CD4-positive, alpha-beta T cell (primary cell): ENCODE measurements at regions of chr19 and their contacts with region 1.

Region 1: GRCh38 chr19:36528194-36528920 is at the start of gene ZNF260:
- DNase-seq: peak; percentile 82 to 97 (median 88)
- ATAC-seq: peak; percentile 87
- H3K4me3 ChIP-seq: peak within 1 kb of the TSS; percentile 80
- H3K4me3 Mint-ChIP-seq: peak within 1 kb of the TSS; percentile 97
- H3K27ac ChIP-seq: peak within 1 kb of the TSS; percentile 72 to 90
- H3K27ac Mint-ChIP-seq: peak within 1 kb of the TSS; percentile 93
- H3K4me1 ChIP-seq: peaks cover 19% of the 10 kb centered on the region
- H3K4me1 Mint-ChIP-seq: peaks cover 29% of the 10 kb centered on the region
- H3K27me3 ChIP-seq: no peaks in the 10 kb centered on the region
- H3K27me3 Mint-ChIP-seq: no peaks in the 10 kb centered on the region
- CTCF ChIP-seq: no peak
- total RNA-seq, gene ZNF260: 2.0 to 5.0 TPM

Region 2: GRCh38 chr19:36418287-36419001 is 109.9 kb before region 1 on chr19 and contains the start of gene ZFP82:
- CTCF ChIA-PET with region 1: no interaction called
- POLR2A ChIA-PET with region 1: interaction called, 4 read pairs
- intact Hi-C with region 1: loop called in 1 of 2 experiments (anchors 2 kb)
- DNase-seq: peak; percentile 54 to 86 (median 70)
- ATAC-seq: peak; percentile 86
- H3K4me3 ChIP-seq: peak within 1 kb of the TSS; percentile 93
- H3K4me3 Mint-ChIP-seq: peak within 1 kb of the TSS; percentile 95
- H3K27ac ChIP-seq: peak within 1 kb of the TSS; percentile 51 to 78
- H3K27ac Mint-ChIP-seq: peak within 1 kb of the TSS; percentile 93
- H3K4me1 ChIP-seq: peaks cover 19% of the 10 kb centered on the region
- H3K4me1 Mint-ChIP-seq: peaks cover 27% of the 10 kb centered on the region
- H3K27me3 ChIP-seq: peaks cover 16 to 23% of the 10 kb centered on the region in 2 experiments
- H3K27me3 Mint-ChIP-seq: peaks cover 29% of the 10 kb centered on the region
- CTCF ChIP-seq: no peak
- total RNA-seq, gene ZFP82: 3.4 to 3.8 TPM

Region 3: GRCh38 chr19:36573020-36573885 is 44.9 kb after region 1 on chr19 and contains the start of gene ZNF529:
- CTCF ChIA-PET with region 1: interaction called, 3 read pairs
- POLR2A ChIA-PET with region 1: interaction called, 21 read pairs
- intact Hi-C with region 1: loop called (anchors 1 kb)
- DNase-seq: peak; percentile 69 to 94 (median 78)
- ATAC-seq: peak; percentile 92
- H3K4me3 ChIP-seq: peak within 1 kb of the TSS; percentile 88
- H3K4me3 Mint-ChIP-seq: peak within 1 kb of the TSS; percentile 94
- H3K27ac ChIP-seq: peak within 1 kb of the TSS; percentile 89 to 97
- H3K27ac Mint-ChIP-seq: peak within 1 kb of the TSS; percentile 93
- H3K4me1 ChIP-seq: peaks cover 25% of the 10 kb centered on the region
- H3K4me1 Mint-ChIP-seq: peaks cover 39% of the 10 kb centered on the region
- H3K27me3 ChIP-seq: no peaks in the 10 kb centered on the region
- H3K27me3 Mint-ChIP-seq: no peaks in the 10 kb centered on the region
- CTCF ChIP-seq: no peak
- total RNA-seq, gene ZNF529: 39.6 to 42.7 TPM

Region 4: GRCh38 chr19:36687214-36688056 is 159.1 kb after region 1 on chr19 and contains the start of gene ZNF567:
- CTCF ChIA-PET with region 1: no interaction called
- POLR2A ChIA-PET with region 1: interaction called, 3 read pairs
- intact Hi-C with region 1: loop called in 1 of 2 experiments (anchors 1 kb)
- DNase-seq: peak; percentile 94 to 99 (median 97)
- ATAC-seq: peak; percentile 93
- H3K4me3 ChIP-seq: peak within 1 kb of the TSS; percentile 67
- H3K4me3 Mint-ChIP-seq: peak within 1 kb of the TSS; percentile 99
- H3K27ac ChIP-seq: peak within 1 kb of the TSS; percentile 47 to 56
- H3K27ac Mint-ChIP-seq: peak within 1 kb of the TSS; percentile 97
- H3K4me1 ChIP-seq: peaks cover 23% of the 10 kb centered on the region
- H3K4me1 Mint-ChIP-seq: peaks cover 40% of the 10 kb centered on the region
- H3K27me3 ChIP-seq: no peaks in the 10 kb centered on the region
- H3K27me3 Mint-ChIP-seq: no peaks in the 10 kb centered on the region
- CTCF ChIP-seq: no peak
- total RNA-seq, gene ZNF567: 7.3 to 7.6 TPM

Region 5: GRCh38 chr19:37172368-37173366 is 644.3 kb after region 1 on chr19 and contains the start of gene ZNF585A:
- CTCF ChIA-PET with region 1: no interaction called
- POLR2A ChIA-PET with region 1: no interaction called
- intact Hi-C with region 1: loop called in 1 of 2 experiments (anchors 5 kb)
- DNase-seq: peak; percentile 83 to 98 (median 89)
- ATAC-seq: peak; percentile 99
- H3K4me3 ChIP-seq: peak within 1 kb of the TSS; percentile 77
- H3K4me3 Mint-ChIP-seq: no peak within 1 kb of the TSS
- H3K27ac ChIP-seq: peak within 1 kb of the TSS; percentile 63 to 73
- H3K27ac Mint-ChIP-seq: no peak within 1 kb of the TSS
- H3K4me1 ChIP-seq: peaks cover 11% of the 10 kb centered on the region
- H3K4me1 Mint-ChIP-seq: no peaks in the 10 kb centered on the region
- H3K27me3 ChIP-seq: no peaks in the 10 kb centered on the region
- H3K27me3 Mint-ChIP-seq: no peaks in the 10 kb centered on the region
- CTCF ChIP-seq: no peak
- total RNA-seq, gene ZNF585A: 4.5 to 4.6 TPM